ENCODE measurements at regions of chr9 and their contacts with region 1.

Region 1: DNA sequence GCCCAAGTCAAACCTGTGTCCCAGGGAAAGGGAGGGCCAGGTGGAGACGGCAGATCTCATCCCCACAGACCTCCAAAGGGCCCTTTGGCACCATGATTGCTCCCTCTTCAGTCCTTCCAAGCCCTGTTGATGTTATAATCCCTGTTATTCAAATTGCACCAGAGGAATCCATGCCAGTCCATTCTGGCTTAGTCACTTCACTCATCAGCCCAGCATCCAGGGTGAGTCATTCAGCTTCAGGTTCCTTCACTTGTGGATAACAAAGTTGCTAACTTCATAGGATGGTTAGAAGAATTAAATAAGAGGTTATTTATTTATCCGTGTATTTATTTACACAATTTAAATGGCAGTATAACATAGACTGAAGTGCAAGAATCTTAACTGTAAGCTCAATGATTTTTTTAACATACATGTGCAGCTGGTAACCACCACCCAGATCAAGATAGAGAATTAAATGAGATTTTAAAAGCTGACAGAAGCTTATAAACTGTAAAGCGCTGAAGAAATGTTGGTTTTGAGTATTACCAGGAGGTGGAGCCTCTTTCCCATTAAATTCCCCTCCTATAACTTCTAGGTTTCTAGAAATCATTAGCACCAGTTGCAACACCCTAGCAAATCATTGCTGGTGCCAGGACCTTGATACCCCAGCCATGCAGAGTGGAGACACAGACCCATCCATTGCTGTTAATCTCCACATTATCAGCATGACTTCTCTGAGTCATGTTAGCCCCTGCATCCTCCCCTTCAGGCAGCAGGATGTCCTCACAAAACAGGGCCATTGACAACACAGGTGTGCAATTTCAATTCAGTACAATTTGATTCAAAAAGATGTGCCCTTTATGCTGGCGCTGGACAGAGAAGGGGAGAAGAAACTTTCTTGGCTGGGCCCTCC is 77.4 kb downstream of the SEC61B start:
- DNase-seq: no peak
- H3K4me3 ChIP-seq: no peak overlapping the region
- CTCF ChIP-seq: no peak
- POLR2A ChIP-seq: no peak

Region 2: GRCh38 chr9:99085949-99086948 is 213.2 kb before region 1 on chr9:
- intact Hi-C with region 1: loop called (anchors 5 kb)
- DNase-seq: peak in 1 of 2 donors; percentile 34
- H3K4me3 ChIP-seq: no peak overlapping the region
- CTCF ChIP-seq: no peak
- POLR2A ChIP-seq: no peak